Psoas muscle (tissue), 8 donors: ENCODE measurements at regions of chr16 and their contacts with region 1.

Region 1: GRCh38 chr16:21184834-21185233 is 26.4 kb downstream of the LDAF1 start:
- DNase-seq: no peak
- ATAC-seq: no peak
- H3K4me3 ChIP-seq: no peak overlapping the region
- H3K27ac ChIP-seq: no peak overlapping the region
- H3K4me1 ChIP-seq: no peaks in the 10 kb centered on the region
- H3K27me3 ChIP-seq: no peaks in the 10 kb centered on the region
- CTCF ChIP-seq: no peak

Region 2: DNA sequence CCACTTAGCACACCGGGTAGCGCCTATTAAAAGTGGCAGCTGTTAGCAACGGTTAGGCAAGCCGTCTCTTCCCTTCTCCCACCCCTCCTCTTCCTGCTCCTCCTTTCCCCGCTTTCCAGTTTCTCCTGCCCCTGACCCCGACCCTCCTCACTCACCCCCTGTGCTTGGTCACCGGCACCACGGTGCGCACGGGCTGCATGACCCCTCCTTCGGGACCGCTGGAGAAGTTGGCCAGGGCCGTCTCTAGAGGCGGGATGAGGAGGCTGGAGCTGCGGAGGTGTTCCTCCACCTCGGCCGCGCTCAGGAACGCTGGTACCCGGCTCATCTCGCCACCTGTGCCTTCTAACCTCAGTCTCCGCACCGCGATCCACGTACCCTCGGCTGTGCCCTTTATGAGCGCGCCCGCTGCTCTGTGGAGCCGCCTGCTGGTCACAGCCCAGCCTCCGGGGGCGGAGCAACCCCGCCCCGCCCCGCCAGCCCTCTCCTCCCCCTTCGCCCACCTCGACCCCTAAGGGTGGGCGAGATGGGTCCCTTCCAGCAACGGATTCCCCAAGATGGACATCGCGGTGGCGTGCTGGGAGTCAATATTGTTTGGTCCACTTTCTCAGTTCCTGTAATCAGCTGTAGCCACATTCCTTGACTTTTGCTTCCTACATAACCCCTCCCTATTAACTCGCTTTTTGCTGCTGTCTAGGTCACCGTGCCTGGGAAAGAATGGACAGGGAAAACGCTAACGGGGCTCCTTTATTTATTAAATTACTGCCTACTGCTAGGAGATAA is 93.3 kb after region 1 on chr16 and contains the start of gene CRYM:
- intact Hi-C with region 1: loop called in 1 of 2 experiments (anchors 5 kb)
- DNase-seq: peak; percentile 50 to 70
- ATAC-seq: peak; percentile 88 to 94 (median 94)
- H3K4me3 ChIP-seq: peak within 1 kb of the TSS; percentile 66
- H3K27ac ChIP-seq: peak within 1 kb of the TSS; percentile 0
- H3K4me1 ChIP-seq: peaks cover 4% of the 10 kb centered on the region
- H3K27me3 ChIP-seq: peaks cover 0 to 25% (median 0%) of the 10 kb centered on the region in 3 donors
- CTCF ChIP-seq: peak; percentile 75
- total RNA-seq, gene CRYM: 0.25 to 33.4 (median 3.9) TPM

Region 3: GRCh38 chr16:21300309-21301167 is 115.7 kb after region 1 on chr16:
- intact Hi-C with region 1: loop called (anchors 2 to 5 kb)
- DNase-seq: peak; percentile 89 to 90
- ATAC-seq: peak; percentile 96 to 99 (median 98)
- H3K4me3 ChIP-seq: peak overlapping the region; percentile 64
- H3K27ac ChIP-seq: peak overlapping the region; percentile 27
- H3K4me1 ChIP-seq: peaks cover 8% of the 10 kb centered on the region
- H3K27me3 ChIP-seq: no peaks in the 10 kb centered on the region
- CTCF ChIP-seq: peak; percentile 69